Activated T-helper 2 cell treated with anti-CD3 and anti-CD28 coated beads, Interferon-gamma antibody, Interleukin-2, Interleukin-4, amounts not matched to agents 10 μg/mL and 5 μg/mL and 100 μg/mL, durations not matched to agents 14 hours and 24 hours and 36 hours (primary cell): ENCODE measurements at regions of chr7 and their contacts with region 1.

Region 1: GRCh38 chr7:26078437-26079336 is 73.3 kb upstream of the NFE2L3 start:
- DNase-seq: peak; percentile 71
- H3K4me3 Mint-ChIP-seq: no peak overlapping the region
- H3K27ac Mint-ChIP-seq: no peak overlapping the region
- H3K4me1 Mint-ChIP-seq: peaks cover 5% of the 10 kb centered on the region
- H3K27me3 Mint-ChIP-seq: peaks cover 57% of the 10 kb centered on the region

Region 2: DNA sequence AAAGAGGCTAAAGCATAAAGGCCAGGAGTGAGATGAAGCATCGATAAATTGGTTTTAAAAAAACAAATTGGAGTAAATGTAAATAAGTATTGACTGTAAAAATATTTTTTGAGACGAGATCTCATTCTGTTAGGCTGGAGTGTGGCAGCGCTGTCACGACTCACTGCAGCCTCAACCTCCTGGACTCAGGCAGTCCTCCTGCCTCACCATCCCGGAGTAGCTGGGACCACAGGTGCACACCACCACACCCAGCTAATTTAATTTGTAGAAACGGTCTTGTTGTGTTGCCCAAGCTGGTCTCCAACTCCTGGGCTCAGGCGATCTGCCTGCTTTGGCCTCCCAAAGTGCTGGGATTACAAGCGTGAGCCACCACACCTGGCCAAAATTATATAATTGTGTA is 104.0 kb after region 1 on chr7:
- intact Hi-C with region 1: no loop called
- DNase-seq: no peak
- H3K4me3 Mint-ChIP-seq: no peak overlapping the region
- H3K27ac Mint-ChIP-seq: no peak overlapping the region
- H3K4me1 Mint-ChIP-seq: peaks cover 40% of the 10 kb centered on the region
- H3K27me3 Mint-ChIP-seq: no peaks in the 10 kb centered on the region

Region 3: DNA sequence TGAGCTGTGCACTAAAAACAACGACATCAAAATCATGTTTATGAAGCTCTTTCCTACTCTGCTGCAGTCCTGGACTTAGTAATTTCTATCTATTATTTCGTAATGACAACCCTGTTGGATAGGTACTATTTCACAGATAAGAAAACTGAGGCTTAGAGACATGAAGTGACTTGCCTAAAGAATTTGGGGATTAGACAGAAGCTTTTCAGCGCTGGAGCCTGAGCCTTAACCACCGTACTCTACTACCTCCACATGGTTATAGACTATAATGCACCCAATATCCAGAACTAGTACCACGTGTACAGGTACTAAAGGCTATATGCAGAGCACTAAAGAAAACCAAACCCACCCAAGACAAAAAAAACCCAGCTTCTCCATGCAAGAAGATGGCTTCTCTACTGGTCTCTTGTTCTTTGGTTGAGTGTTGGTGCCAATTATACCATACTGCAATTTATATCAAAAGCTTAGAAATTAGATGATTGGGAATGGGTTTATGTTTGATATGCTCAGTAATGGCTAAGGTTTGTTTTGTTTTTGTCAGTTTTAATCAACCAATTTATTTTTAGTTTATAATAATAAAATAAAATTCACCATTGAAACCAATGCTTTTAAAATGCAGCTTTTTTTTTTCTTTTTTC is 206.4 kb after region 1 on chr7:
- intact Hi-C with region 1: loop called (anchors 2 kb)
- DNase-seq: no peak
- H3K4me3 Mint-ChIP-seq: no peak overlapping the region
- H3K27ac Mint-ChIP-seq: no peak overlapping the region
- H3K4me1 Mint-ChIP-seq: peaks cover 7% of the 10 kb centered on the region
- H3K27me3 Mint-ChIP-seq: peaks cover 4% of the 10 kb centered on the region